Right ventricle myocardium inferior (tissue), 1 donor: ENCODE measurements at regions of chr10 and their contacts with region 1.

Region 1: DNA sequence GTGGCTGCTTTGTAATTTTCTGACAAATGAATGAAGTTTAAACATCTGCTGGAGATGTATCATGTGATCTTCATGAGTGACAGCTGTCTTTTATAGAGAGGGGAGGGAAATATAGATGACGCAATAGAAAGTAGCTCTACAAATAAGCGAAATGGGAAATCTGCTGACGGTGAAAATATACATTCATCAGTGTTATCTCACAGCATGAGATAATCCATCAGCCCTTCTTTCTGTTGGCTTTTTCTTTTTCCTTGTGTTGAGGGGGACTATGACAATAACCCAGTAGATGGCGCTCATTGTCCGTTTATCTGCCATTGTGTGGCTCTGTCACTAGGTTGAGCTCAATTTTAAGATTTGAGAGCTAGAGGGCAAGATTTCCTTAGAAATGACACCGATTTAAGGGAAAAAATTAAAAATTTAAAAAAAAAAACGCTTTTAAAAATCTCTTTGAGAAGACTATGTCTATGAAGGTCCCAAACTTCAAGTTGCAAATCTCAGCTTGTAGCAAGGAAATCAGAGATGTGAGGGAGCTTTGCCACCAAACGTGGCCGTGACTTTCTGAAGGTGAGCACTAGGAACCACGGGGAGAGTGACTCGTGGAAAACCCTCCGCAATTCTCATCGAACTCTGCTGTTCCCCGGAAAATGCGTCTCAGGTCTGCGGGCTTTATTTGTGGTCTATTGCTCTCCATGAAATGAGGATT is 114.6 kb upstream of the SFMBT2 start:
- DNase-seq: no peak
- ATAC-seq: peak; percentile 69

Region 2: DNA sequence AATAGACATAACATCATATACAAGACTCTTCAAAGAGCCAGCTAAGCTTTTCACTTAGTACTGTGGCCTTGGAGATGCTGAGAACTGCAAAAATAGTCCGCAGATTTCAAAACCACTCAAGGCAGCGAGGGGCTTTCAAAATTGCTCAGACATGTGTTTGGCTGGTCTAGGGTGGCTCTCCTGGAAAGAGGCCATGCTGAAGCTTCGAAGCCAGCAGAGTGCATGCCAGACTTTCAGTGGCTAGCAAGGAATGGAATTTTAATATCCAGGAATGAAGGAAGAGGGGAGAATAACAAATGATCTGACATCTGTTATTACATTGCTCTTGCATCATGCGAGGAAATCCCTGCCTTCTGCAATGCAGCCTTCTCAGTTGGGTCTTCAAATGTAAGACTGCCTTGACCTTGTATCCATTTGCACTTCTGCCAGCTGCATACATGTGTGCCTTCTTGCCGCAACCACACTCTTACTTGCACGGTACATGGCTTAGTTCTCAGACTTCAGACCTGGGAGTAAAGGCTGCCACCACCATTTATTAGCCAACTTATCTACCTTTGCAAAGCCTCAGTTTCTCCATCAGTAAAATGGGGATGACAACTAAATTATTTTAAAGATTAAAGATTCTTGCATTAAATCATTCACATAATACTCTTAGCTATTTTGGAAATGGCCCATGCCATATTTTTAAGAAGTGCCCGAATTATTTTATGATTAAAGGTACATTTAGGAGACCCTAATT is 85.4 kb after region 1 on chr10:
- intact Hi-C with region 1: no loop called
- DNase-seq: no peak
- ATAC-seq: peak; percentile 66

Region 3: DNA sequence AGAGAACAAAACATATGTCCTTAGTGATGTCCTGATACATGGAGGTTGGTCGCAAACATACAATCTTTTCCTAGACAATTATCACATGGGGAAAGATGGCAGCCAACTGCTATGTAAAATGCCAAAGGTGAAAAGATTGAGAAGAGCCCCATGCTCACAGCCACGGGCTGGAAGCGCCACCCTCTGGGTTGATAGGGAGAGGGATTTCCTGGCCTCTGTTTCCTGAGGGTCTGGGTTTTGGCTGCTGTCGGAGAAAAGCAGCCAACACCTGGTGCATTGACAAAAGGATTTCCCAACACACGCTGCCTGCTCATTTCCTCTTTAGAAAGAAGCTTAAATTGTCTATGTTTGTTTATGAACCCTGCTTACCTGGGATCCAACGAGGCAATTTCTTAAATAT is 97.5 kb after region 1 on chr10:
- intact Hi-C with region 1: loop called (anchors 1 kb)
- DNase-seq: no peak
- ATAC-seq: peak; percentile 56

Region 4: GRCh38 chr10:7687228-7687907 is 161.9 kb after region 1 on chr10:
- intact Hi-C with region 1: loop called (anchors 1 kb)
- DNase-seq: peak; percentile 79
- ATAC-seq: peak; percentile 94

Region 5: DNA sequence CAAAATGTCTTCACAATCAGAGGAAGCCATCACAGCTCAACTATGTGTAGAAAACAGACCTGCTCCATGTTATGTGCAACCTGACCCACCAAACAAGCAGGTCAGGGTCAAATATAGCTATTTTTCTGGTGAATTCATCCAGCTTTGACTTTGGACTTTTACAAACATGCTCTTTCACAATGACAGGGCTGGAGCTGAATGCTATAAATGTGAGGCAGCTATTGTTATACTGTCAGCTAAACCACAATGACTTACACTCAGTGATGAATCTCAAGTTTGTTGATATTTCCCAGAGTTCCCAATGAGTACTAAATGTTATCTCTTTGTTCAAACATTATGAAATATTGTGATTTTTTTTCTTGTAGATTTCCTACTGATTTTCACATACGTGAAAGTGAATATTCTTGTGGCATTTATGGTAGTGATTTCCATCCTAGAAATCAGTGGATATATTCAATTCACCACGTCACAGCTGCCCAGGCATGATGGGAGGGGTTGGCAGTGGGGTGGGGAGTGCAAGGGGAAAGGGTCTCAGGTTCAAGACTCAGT is 175.2 kb after region 1 on chr10:
- intact Hi-C with region 1: no loop called
- DNase-seq: no peak
- ATAC-seq: no peak

Region 6: GRCh38 chr10:9302120-9302746 is 1776.8 kb after region 1 on chr10:
- intact Hi-C with region 1: loop called (anchors 5 kb)
- DNase-seq: no peak
- ATAC-seq: no peak